ENCODE measurements at regions of chr12 and their contacts with region 1.

Region 1: DNA sequence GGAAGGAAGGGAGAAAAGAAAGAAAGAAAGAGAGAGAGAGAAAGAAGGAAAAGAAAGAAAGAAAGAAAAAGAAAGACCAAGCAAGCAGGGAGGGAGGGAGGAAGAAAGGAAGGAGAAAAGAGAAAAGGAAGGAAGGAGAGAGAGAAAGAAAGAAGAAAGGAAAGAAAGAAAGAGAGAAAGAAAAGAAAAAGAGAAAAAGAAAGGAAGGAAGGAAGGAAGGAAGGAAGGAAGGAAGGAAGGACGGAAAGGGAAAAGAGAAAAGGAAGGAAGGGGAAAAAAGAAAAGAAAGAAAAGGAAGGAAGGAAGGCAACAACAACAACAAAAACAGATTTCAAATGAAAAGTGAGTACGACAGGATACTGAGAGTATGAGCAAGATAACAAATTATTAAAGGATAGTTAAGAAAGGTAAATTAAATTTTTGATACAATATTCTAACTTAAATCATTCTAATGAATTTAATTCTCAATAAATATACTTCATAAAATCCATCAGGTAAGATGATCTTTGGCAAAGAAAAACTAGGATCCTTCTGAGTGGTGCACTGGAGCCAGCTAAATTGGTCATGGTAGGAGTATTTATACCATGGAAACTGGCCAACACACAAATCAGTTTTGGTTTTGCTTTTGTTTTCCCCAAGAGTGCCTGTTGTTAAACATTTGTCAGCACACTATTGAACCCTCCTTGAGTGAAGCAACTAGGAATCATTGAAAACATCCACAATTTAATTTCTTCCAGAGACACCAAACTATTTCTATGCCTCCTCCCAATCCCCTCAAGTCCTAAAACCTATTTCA is 56.1 kb upstream of the DYRK2 start:
- DNase-seq: peak in 1 of 35 experiments; percentile 55
- ATAC-seq: peak in 3 of 4 experiments; percentile 42 to 51 (median 43)
- H3K4me3 ChIP-seq: no peak overlapping the region
- H3K4me3 Mint-ChIP-seq: peak overlapping the region; percentile 0 to 62 (median 28)
- H3K27ac ChIP-seq: peak overlapping the region; percentile 52
- H3K27ac Mint-ChIP-seq: peak overlapping the region; percentile 89 to 91
- H3K4me1 ChIP-seq: peaks cover 38 to 48% of the 10 kb centered on the region in 2 experiments
- H3K4me1 Mint-ChIP-seq: peaks cover 56 to 69% (median 68%) of the 10 kb centered on the region in 3 donors
- H3K27me3 ChIP-seq: no peaks in the 10 kb centered on the region
- H3K27me3 Mint-ChIP-seq: no peaks in the 10 kb centered on the region

Region 2: DNA sequence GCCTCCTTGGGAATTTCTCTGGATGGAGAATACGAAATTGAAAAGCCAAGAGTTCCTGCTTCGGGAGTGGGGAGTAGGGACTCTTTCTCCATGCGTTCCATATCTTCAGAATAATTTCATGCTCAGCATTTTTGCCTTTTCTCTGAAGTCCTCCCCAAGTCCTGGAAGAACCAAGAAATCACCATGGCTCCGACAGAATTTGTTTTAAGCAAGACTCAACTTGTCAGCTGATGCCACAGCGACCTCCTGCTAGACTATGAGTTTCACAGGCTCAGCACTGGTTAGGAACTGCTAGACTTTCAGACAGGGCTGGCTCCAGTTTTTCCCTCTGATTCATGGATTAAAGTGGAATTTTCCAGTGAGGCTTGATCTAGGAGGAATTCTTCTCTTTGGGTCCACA is 134.2 kb before region 1 on chr12:
- CTCF ChIA-PET with region 1: no interaction called
- POLR2A ChIA-PET with region 1: interaction called in 1 of 2 experiments, 13 read pairs
- DNase-seq: no peak
- ATAC-seq: no peak
- H3K4me3 ChIP-seq: no peak overlapping the region
- H3K4me3 Mint-ChIP-seq: no peak overlapping the region
- H3K27ac ChIP-seq: no peak overlapping the region
- H3K27ac Mint-ChIP-seq: no peak overlapping the region
- H3K4me1 ChIP-seq: no peaks in the 10 kb centered on the region
- H3K4me1 Mint-ChIP-seq: peaks cover 0 to 2% (median 0%) of the 10 kb centered on the region in 3 donors
- H3K27me3 ChIP-seq: no peaks in the 10 kb centered on the region
- H3K27me3 Mint-ChIP-seq: no peaks in the 10 kb centered on the region

Region 3: GRCh38 chr12:67498991-67499390 is 93.4 kb before region 1 on chr12:
- CTCF ChIA-PET with region 1: no interaction called
- POLR2A ChIA-PET with region 1: interaction called in 1 of 2 experiments, 12 read pairs
- DNase-seq: no peak
- ATAC-seq: no peak
- H3K4me3 ChIP-seq: no peak overlapping the region
- H3K4me3 Mint-ChIP-seq: no peak overlapping the region
- H3K27ac ChIP-seq: no peak overlapping the region
- H3K27ac Mint-ChIP-seq: no peak overlapping the region
- H3K4me1 ChIP-seq: peaks cover 0 to 3% of the 10 kb centered on the region in 2 experiments
- H3K4me1 Mint-ChIP-seq: peaks cover 27 to 31% (median 29%) of the 10 kb centered on the region in 3 donors
- H3K27me3 ChIP-seq: no peaks in the 10 kb centered on the region
- H3K27me3 Mint-ChIP-seq: no peaks in the 10 kb centered on the region

Region 4: DNA sequence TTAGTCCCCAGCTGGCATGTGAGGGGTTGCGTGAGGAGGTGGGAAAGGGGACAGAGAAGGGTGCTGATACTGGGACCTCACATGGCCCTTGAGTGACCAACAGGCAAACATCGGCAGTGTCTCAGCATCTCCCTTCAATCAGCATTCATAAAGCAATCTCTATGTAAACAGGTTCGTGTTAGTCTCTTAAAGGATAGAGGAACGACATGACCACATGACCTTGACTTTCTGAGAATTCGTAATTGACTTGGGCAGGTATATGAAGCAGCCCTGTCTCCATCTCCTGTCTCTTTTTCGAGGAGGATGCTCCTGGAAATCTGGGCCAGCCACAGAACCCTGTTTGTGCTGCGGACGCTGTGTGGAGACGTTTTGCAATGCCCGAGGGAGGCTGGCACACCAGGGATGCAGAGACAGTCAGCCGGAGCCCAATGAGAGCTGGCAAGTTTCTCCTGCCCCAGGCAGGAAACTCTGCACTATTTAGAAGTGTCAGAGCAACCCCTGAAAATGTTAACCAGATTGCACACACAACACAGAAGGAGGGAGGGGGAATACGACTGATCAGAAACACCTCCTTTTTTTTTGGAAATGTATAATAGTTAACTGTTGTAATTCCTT is 47.2 kb before region 1 on chr12:
- CTCF ChIA-PET with region 1: no interaction called
- POLR2A ChIA-PET with region 1: no interaction called
- DNase-seq: no peak
- ATAC-seq: peak in 3 of 4 experiments; percentile 56 to 66 (median 66)
- H3K4me3 ChIP-seq: no peak overlapping the region
- H3K4me3 Mint-ChIP-seq: peak overlapping the region in 2 of 3 donors; percentile 35 to 49
- H3K27ac ChIP-seq: no peak overlapping the region
- H3K27ac Mint-ChIP-seq: peak overlapping the region in 1 of 2 donors; percentile 60
- H3K4me1 ChIP-seq: peaks cover 3 to 7% of the 10 kb centered on the region in 2 experiments
- H3K4me1 Mint-ChIP-seq: peaks cover 42 to 46% (median 46%) of the 10 kb centered on the region in 3 donors
- H3K27me3 ChIP-seq: no peaks in the 10 kb centered on the region
- H3K27me3 Mint-ChIP-seq: no peaks in the 10 kb centered on the region

Region 5: DNA sequence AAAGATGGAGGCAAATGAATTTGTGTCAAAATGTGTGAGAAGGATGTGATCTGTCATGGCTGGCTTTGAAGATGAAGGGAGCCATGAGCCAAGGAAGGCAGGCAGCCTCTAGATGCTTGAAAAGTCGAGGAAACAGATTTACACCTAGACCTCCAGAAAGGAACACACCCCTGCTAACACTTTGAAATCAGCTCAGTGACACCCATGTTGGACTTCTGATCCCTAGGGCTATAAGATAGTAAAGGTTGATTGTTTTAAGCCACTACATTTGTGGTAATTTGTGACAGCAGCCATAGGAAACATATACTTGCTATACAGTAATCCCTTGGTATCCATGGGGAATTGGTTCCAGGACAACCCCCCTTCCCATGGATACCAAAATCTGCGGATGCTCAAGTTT is 24.4 kb before region 1 on chr12:
- CTCF ChIA-PET with region 1: no interaction called
- POLR2A ChIA-PET with region 1: no interaction called
- DNase-seq: no peak
- ATAC-seq: no peak
- H3K4me3 ChIP-seq: no peak overlapping the region
- H3K4me3 Mint-ChIP-seq: no peak overlapping the region
- H3K27ac ChIP-seq: no peak overlapping the region
- H3K27ac Mint-ChIP-seq: no peak overlapping the region
- H3K4me1 ChIP-seq: no peaks in the 10 kb centered on the region
- H3K4me1 Mint-ChIP-seq: peaks cover 3 to 10% (median 9%) of the 10 kb centered on the region in 3 donors
- H3K27me3 ChIP-seq: no peaks in the 10 kb centered on the region
- H3K27me3 Mint-ChIP-seq: peaks cover 0 to 7% of the 10 kb centered on the region in 2 donors

Region 6: DNA sequence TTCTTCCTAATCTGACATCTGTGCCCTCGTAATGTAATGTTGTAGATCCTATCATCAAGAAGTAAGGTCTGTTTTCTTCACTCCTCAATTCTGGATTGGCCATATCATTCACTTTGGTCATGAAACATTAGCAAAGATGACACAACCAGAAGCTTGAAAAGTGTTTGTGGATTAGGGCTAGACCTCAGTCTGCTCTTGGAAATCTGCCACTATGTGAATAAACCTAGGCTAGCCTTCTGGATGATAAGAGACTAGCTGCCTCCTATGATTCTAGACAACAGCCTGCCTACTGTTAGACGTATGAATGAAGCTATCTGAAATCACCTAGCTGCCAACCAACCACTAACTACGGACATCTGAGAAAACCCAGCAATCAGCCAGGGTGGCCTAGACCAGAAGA is 1717.0 kb after region 1 on chr12:
- CTCF ChIA-PET with region 1: no interaction called
- POLR2A ChIA-PET with region 1: no interaction called
- DNase-seq: no peak
- ATAC-seq: no peak
- H3K4me3 ChIP-seq: no peak overlapping the region
- H3K4me3 Mint-ChIP-seq: no peak overlapping the region
- H3K27ac ChIP-seq: no peak overlapping the region
- H3K27ac Mint-ChIP-seq: no peak overlapping the region
- H3K4me1 ChIP-seq: no peaks in the 10 kb centered on the region
- H3K4me1 Mint-ChIP-seq: no peaks in the 10 kb centered on the region
- H3K27me3 ChIP-seq: no peaks in the 10 kb centered on the region
- H3K27me3 Mint-ChIP-seq: no peaks in the 10 kb centered on the region

Measured in T-cell (primary cell).